Naive thymus-derived CD4-positive, alpha-beta T cell (primary cell): ENCODE measurements at regions of chr17 and their contacts with region 1.

Region 1: DNA sequence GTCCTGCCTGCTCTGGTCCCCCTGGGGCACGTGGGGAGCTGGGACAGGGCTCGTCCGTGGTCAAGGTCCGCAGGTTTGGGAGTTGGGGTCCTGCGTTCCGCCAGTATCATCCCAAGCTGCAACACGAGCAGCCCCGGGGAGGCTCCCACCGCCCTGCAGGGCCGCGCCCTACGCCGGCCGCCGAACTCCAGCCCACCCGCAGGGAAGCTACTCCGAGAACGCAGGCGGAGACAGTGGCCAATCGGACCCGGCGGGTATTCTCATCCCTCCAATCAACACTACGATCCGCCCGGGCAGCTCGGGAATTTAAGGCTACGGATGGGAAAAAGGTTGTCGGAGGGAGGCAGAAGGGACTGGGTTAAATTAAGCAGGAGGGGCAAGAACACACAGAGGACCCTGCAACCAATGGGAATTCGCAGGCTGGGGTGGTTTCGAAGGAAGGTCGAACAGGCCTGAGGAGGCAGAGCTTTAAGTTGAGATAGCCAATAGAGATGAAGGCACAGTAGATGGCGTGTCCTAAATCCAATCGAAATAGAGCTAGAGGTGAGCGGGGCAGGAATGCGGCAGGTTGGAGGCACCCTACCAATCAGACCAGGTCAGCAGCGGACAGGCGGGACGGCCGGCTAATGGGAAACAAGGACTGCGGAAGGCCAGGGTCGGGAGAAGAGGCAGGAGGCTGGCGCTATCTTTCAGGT is 626 bp downstream of the SPAG7 start:
- DNase-seq: peak in 8 of 9 donors; percentile 25 to 97 (median 95)
- ATAC-seq: peak; percentile 89
- H3K4me3 ChIP-seq: peak overlapping the region; percentile 93
- H3K4me3 Mint-ChIP-seq: no peak overlapping the region
- H3K27ac ChIP-seq: peak overlapping the region; percentile 79
- H3K27ac Mint-ChIP-seq: peak overlapping the region in 3 of 9 donors; percentile 72 to 90 (median 81)
- H3K4me1 ChIP-seq: peaks cover 17 to 22% of the 10 kb centered on the region in 2 donors
- H3K4me1 Mint-ChIP-seq: peaks cover 15 to 32% (median 24%) of the 10 kb centered on the region in 7 donors
- H3K27me3 ChIP-seq: no peaks in the 10 kb centered on the region
- H3K27me3 Mint-ChIP-seq: no peaks in the 10 kb centered on the region

Region 2: DNA sequence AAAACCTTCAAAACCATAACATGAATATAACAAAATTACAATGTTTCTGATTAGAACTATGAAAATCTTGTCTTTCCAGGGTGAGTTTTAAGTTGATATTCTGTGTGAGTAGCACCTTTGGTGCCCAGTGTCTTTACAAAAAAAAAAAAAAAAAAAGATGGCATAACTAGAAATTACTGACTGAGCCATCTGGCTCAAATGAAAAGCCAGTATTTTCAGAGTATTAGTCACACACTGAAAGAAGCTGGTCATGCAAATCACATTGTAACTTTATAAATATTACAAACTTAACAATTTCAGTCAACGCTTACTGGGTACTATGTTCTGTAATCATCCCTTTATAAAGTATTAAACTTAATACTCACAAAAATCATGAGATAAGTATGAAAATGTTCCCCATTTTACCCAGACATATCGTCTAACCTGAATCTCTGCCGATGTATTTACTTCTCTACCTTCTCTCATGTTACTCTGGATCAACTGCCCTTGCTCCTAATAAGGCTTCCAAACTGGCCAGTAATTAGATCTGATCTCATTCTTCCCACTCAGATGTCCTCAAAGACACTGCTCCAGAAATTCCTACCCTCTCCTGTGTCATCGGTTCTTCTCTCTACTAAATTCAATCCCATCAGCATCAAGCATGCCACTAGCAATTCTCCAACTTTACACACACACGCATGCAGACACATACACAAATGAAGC is 625.9 kb before region 1 on chr17:
- CTCF ChIA-PET with region 1: no interaction called
- POLR2A ChIA-PET with region 1: no interaction called
- intact Hi-C with region 1: no loop called
- DNase-seq: no peak
- ATAC-seq: no peak
- H3K4me3 ChIP-seq: no peak overlapping the region
- H3K4me3 Mint-ChIP-seq: no peak overlapping the region
- H3K27ac ChIP-seq: no peak overlapping the region
- H3K27ac Mint-ChIP-seq: no peak overlapping the region
- H3K4me1 ChIP-seq: peaks cover 0 to 16% of the 10 kb centered on the region in 2 donors
- H3K4me1 Mint-ChIP-seq: peaks cover 11 to 66% (median 46%) of the 10 kb centered on the region in 7 donors
- H3K27me3 ChIP-seq: no peaks in the 10 kb centered on the region
- H3K27me3 Mint-ChIP-seq: no peaks in the 10 kb centered on the region

Region 3: GRCh38 chr17:4554997-4555799 is 411.8 kb before region 1 on chr17 and contains the start of gene MYBBP1A:
- CTCF ChIA-PET with region 1: no interaction called
- POLR2A ChIA-PET with region 1: no interaction called
- intact Hi-C with region 1: loop called in 1 of 2 experiments (anchors 1 kb)
- DNase-seq: peak; percentile 92 to 98 (median 95)
- ATAC-seq: peak; percentile 96
- H3K4me3 ChIP-seq: peak within 1 kb of the TSS; percentile 87
- H3K4me3 Mint-ChIP-seq: peak within 1 kb of the TSS; percentile 87 to 97 (median 95)
- H3K27ac ChIP-seq: peak within 1 kb of the TSS; percentile 79
- H3K27ac Mint-ChIP-seq: peak within 1 kb of the TSS; percentile 88 to 98 (median 96)
- H3K4me1 ChIP-seq: peaks cover 20% of the 10 kb centered on the region in 2 donors
- H3K4me1 Mint-ChIP-seq: peaks cover 16 to 34% (median 27%) of the 10 kb centered on the region in 7 donors
- H3K27me3 ChIP-seq: no peaks in the 10 kb centered on the region
- H3K27me3 Mint-ChIP-seq: no peaks in the 10 kb centered on the region
- total RNA-seq, gene MYBBP1A: 59.8 to 81.8 (median 77.9) TPM

Region 4: GRCh38 chr17:4739122-4740024 is 227.6 kb before region 1 on chr17 and contains the starts of genes CXCL16 and ZMYND15:
- CTCF ChIA-PET with region 1: no interaction called
- POLR2A ChIA-PET with region 1: no interaction called
- intact Hi-C with region 1: no loop called
- DNase-seq: peak; percentile 58 to 71 (median 64)
- ATAC-seq: peak; percentile 70
- H3K4me3 ChIP-seq: peak within 1 kb of the TSS; percentile 72
- H3K4me3 Mint-ChIP-seq: peak within 1 kb of the TSS; percentile 85 to 95 (median 92)
- H3K27ac ChIP-seq: peak within 1 kb of the TSS; percentile 49
- H3K27ac Mint-ChIP-seq: peak within 1 kb of the TSS; percentile 51 to 97 (median 92)
- H3K4me1 ChIP-seq: peaks cover 12 to 15% of the 10 kb centered on the region in 2 donors
- H3K4me1 Mint-ChIP-seq: peaks cover 12 to 25% (median 18%) of the 10 kb centered on the region in 7 donors
- H3K27me3 ChIP-seq: no peaks in the 10 kb centered on the region
- H3K27me3 Mint-ChIP-seq: peaks cover 0 to 36% (median 6%) of the 10 kb centered on the region in 5 donors
- total RNA-seq, gene CXCL16: 2.6 to 68.0 (median 3.4) TPM
- total RNA-seq, gene ZMYND15: 0.22 to 5.2 (median 1.4) TPM in 4 of 5 experiments, not detected in the other

Region 5: GRCh38 chr17:4908301-4908700 is 58.7 kb before region 1 on chr17:
- CTCF ChIA-PET with region 1: interaction called, 5 read pairs
- POLR2A ChIA-PET with region 1: interaction called, 20 read pairs
- intact Hi-C with region 1: loop called (anchors 1 kb)
- DNase-seq: peak in 3 of 9 donors; percentile 20 to 31 (median 27)
- ATAC-seq: no peak
- H3K4me3 ChIP-seq: peak overlapping the region; percentile 13
- H3K4me3 Mint-ChIP-seq: no peak overlapping the region
- H3K27ac ChIP-seq: peak overlapping the region; percentile 56
- H3K27ac Mint-ChIP-seq: no peak overlapping the region
- H3K4me1 ChIP-seq: peaks cover 10 to 25% of the 10 kb centered on the region in 2 donors
- H3K4me1 Mint-ChIP-seq: peaks cover 4 to 11% (median 6%) of the 10 kb centered on the region in 7 donors
- H3K27me3 ChIP-seq: no peaks in the 10 kb centered on the region
- H3K27me3 Mint-ChIP-seq: peaks cover 0 to 15% (median 0%) of the 10 kb centered on the region in 5 donors

Region 6: GRCh38 chr17:4948931-4949320 is 18.1 kb before region 1 on chr17:
- CTCF ChIA-PET with region 1: interaction called, 12 read pairs
- POLR2A ChIA-PET with region 1: interaction called, 278 read pairs
- intact Hi-C with region 1: loop called (anchors 1 kb)
- DNase-seq: peak in 7 of 9 donors; percentile 69 to 84 (median 79)
- ATAC-seq: peak; percentile 58
- H3K4me3 ChIP-seq: peak overlapping the region; percentile 98
- H3K4me3 Mint-ChIP-seq: peak overlapping the region; percentile 92 to 100 (median 98)
- H3K27ac ChIP-seq: peak overlapping the region; percentile 89
- H3K27ac Mint-ChIP-seq: peak overlapping the region; percentile 83 to 100 (median 96)
- H3K4me1 ChIP-seq: peaks cover 27 to 35% of the 10 kb centered on the region in 2 donors
- H3K4me1 Mint-ChIP-seq: peaks cover 37 to 50% (median 43%) of the 10 kb centered on the region in 7 donors
- H3K27me3 ChIP-seq: no peaks in the 10 kb centered on the region
- H3K27me3 Mint-ChIP-seq: peaks cover 0 to 2% (median 0%) of the 10 kb centered on the region in 5 donors

Region 7: GRCh38 chr17:4980644-4981216 is 13.7 kb after region 1 on chr17:
- CTCF ChIA-PET with region 1: interaction called, 13 read pairs
- POLR2A ChIA-PET with region 1: interaction called, 21 read pairs
- intact Hi-C with region 1: loop called in 1 of 2 experiments (anchors 1 kb)
- DNase-seq: peak in 7 of 9 donors; percentile 58 to 77 (median 74)
- ATAC-seq: peak; percentile 92
- H3K4me3 ChIP-seq: no peak overlapping the region
- H3K4me3 Mint-ChIP-seq: peak overlapping the region in 8 of 10 donors; percentile 2 to 83 (median 41)
- H3K27ac ChIP-seq: no peak overlapping the region
- H3K27ac Mint-ChIP-seq: peak overlapping the region; percentile 31 to 78 (median 67)
- H3K4me1 ChIP-seq: peaks cover 3 to 14% of the 10 kb centered on the region in 2 donors
- H3K4me1 Mint-ChIP-seq: peaks cover 13 to 34% (median 26%) of the 10 kb centered on the region in 7 donors
- H3K27me3 ChIP-seq: no peaks in the 10 kb centered on the region
- H3K27me3 Mint-ChIP-seq: no peaks in the 10 kb centered on the region

Region 8: DNA sequence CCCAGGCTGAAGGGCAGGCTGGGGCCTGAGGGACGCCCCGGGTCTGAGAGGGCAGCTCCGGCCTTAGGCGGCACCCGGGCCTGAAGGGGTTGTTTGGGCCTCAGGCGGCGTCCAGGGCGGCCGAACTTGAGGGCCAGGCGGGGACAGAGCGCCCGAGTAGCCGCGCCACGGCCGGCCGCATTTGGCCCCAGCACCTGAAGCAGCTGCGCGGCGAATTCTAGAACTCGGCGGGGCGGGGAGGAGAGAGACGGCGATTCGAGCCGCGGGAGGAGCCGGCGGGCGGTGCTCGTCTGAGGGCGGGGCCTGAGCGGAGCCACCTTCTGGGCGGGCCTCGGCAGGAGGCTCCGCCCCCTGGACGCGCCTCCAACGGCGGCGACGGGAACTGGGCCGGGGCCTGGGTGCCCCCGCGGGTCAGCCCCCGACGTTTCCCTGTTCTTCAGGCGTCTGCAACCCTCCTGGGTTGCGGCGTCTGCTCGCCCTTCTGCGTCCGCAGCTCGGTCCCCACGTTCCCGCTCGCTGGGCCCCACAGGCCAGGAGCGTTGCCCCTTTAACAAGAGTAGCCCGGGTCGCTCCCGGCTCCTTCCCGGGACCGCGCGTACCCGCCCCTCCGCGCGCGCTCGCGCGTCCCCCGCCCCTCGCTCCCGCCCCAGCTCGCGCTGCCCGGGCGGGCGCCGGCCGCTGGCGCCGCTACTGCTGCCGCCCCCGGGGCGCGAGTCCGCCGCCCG is 30.5 kb after region 1 on chr17 and contains the starts of genes INCA1 and KIF1C:
- CTCF ChIA-PET with region 1: no interaction called
- POLR2A ChIA-PET with region 1: interaction called, 27 read pairs
- intact Hi-C with region 1: loop called (anchors 1 kb)
- DNase-seq: peak; percentile 84 to 95 (median 92)
- ATAC-seq: peak; percentile 99
- H3K4me3 ChIP-seq: peak within 1 kb of the TSS; percentile 75
- H3K4me3 Mint-ChIP-seq: peak within 1 kb of the TSS; percentile 80 to 95 (median 88)
- H3K27ac ChIP-seq: peak within 1 kb of the TSS; percentile 83
- H3K27ac Mint-ChIP-seq: peak within 1 kb of the TSS; percentile 76 to 95 (median 88)
- H3K4me1 ChIP-seq: peaks cover 8 to 11% of the 10 kb centered on the region in 2 donors
- H3K4me1 Mint-ChIP-seq: peaks cover 18 to 29% (median 26%) of the 10 kb centered on the region in 7 donors
- H3K27me3 ChIP-seq: no peaks in the 10 kb centered on the region
- H3K27me3 Mint-ChIP-seq: no peaks in the 10 kb centered on the region
- total RNA-seq, gene INCA1: 0.38 to 0.42 (median 0.41) TPM in 4 of 5 experiments, not detected in the other
- total RNA-seq, gene KIF1C: 11.5 to 46.5 (median 21.0) TPM

Region 9: GRCh38 chr17:5111402-5112204 is 144.6 kb after region 1 on chr17 and contains the start of gene ZNF232:
- CTCF ChIA-PET with region 1: interaction called, 3 read pairs
- POLR2A ChIA-PET with region 1: no interaction called
- intact Hi-C with region 1: loop called in 1 of 2 experiments (anchors 5 kb)
- DNase-seq: peak; percentile 83 to 95 (median 87)
- ATAC-seq: peak; percentile 94
- H3K4me3 ChIP-seq: peak within 1 kb of the TSS; percentile 80
- H3K4me3 Mint-ChIP-seq: peak within 1 kb of the TSS; percentile 82 to 96 (median 92)
- H3K27ac ChIP-seq: peak within 1 kb of the TSS; percentile 74
- H3K27ac Mint-ChIP-seq: peak within 1 kb of the TSS; percentile 59 to 96 (median 88)
- H3K4me1 ChIP-seq: peaks cover 9% of the 10 kb centered on the region in 2 donors
- H3K4me1 Mint-ChIP-seq: peaks cover 14 to 48% (median 36%) of the 10 kb centered on the region in 7 donors
- H3K27me3 ChIP-seq: peaks cover 0 to 3% of the 10 kb centered on the region in 2 donors
- H3K27me3 Mint-ChIP-seq: peaks cover 12 to 19% (median 16%) of the 10 kb centered on the region in 5 donors
- total RNA-seq, gene ZNF232: 5.1 to 20.3 (median 11.2) TPM